CD4-positive, alpha-beta T cell (primary cell): ENCODE measurements at regions of chr12 and their contacts with region 1.

Region 1: DNA sequence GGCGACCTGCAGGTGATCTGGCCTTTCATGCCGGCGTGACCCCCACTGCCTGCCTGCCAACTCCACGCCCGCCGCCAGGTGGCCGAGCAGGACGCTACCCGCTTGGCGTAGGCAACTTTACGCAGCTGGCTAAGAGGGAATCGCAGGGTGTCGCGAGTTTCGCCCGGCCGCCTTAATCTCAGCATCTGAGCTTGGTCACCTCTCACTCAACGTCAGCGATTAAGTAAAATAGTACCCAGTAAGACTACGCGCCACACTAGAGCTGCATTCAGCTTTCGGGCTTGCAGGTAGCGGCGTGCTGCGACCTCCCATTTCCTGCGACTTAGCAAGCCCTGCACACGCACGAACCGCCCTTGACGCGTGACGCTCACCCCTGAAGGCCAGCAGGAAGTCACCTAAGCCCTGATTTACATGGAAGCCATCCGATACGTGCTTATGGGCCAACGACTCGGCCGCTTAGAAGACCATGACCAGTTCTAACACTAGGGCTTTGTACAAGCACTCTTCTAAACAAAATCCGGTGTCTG is 33.2 kb downstream of the WBP11 start:
- DNase-seq: peak; percentile 72 to 96 (median 83)
- ATAC-seq: peak; percentile 50
- H3K4me3 ChIP-seq: peak overlapping the region; percentile 71
- H3K4me3 Mint-ChIP-seq: peak overlapping the region; percentile 97
- H3K27ac ChIP-seq: peak overlapping the region; percentile 95 to 99
- H3K27ac Mint-ChIP-seq: peak overlapping the region; percentile 100
- H3K4me1 ChIP-seq: peaks cover 40% of the 10 kb centered on the region
- H3K4me1 Mint-ChIP-seq: peaks cover 79% of the 10 kb centered on the region
- H3K27me3 ChIP-seq: no peaks in the 10 kb centered on the region
- H3K27me3 Mint-ChIP-seq: no peaks in the 10 kb centered on the region
- CTCF ChIP-seq: peak; percentile 81

Region 2: DNA sequence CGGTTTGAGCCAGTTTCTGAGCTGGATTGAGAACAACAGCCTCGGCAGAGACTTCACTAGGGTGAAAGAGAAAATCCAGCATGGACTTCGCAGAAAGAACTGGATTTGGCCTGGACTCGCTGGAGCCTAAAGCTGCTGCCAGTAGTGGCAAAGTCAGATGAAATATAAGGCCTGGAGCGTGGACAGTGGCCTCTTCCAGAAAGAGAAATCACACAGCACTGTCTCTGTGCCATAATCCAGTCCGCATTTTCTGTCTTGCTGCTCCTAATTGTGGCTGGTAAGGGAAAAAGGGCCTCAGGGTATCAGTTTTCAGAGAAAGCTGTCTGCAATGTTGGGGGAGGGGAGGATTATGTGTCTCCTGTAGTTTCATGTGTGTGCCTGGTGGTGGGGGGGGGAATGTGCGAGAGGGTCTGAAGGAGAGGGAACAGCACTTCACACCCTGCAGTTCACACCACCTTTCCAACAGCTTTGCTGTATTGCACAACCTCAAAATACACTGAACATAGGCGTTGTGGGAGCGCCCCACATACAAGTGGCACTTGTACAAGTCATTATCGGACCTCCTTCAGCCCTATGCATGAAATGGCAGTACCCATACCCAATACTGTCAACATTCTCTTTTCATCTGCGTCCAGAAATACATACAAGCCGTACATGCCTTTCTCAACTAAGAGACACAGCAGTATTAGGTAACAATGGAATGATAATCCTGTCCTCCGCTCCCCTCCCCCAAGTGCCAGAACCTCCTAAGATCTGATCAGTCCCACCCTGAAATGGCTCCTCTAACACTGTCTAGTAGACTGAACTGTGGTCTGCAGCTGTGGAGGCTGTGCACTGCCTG is 512.1 kb before region 1 on chr12:
- CTCF ChIA-PET with region 1: no interaction called
- POLR2A ChIA-PET with region 1: interaction called, 14 read pairs
- intact Hi-C with region 1: loop called in 1 of 2 experiments (anchors 5 kb)
- DNase-seq: peak; percentile 57 to 95 (median 68)
- ATAC-seq: peak; percentile 54
- H3K4me3 ChIP-seq: peak overlapping the region; percentile 21
- H3K4me3 Mint-ChIP-seq: peak overlapping the region; percentile 83
- H3K27ac ChIP-seq: peak overlapping the region; percentile 68 to 84
- H3K27ac Mint-ChIP-seq: peak overlapping the region; percentile 98
- H3K4me1 ChIP-seq: peaks cover 43% of the 10 kb centered on the region
- H3K4me1 Mint-ChIP-seq: peaks cover 55% of the 10 kb centered on the region
- H3K27me3 ChIP-seq: no peaks in the 10 kb centered on the region
- H3K27me3 Mint-ChIP-seq: no peaks in the 10 kb centered on the region
- CTCF ChIP-seq: no peak

Region 3: GRCh38 chr12:14403711-14404196 is 366.3 kb before region 1 on chr12:
- CTCF ChIA-PET with region 1: no interaction called
- POLR2A ChIA-PET with region 1: interaction called, 6 read pairs
- intact Hi-C with region 1: loop called in 1 of 2 experiments (anchors 10 kb)
- DNase-seq: peak in 4 of 14 experiments; percentile 16 to 85 (median 80)
- ATAC-seq: peak; percentile 74
- H3K4me3 ChIP-seq: no peak overlapping the region
- H3K4me3 Mint-ChIP-seq: peak overlapping the region; percentile 69
- H3K27ac ChIP-seq: peak overlapping the region in 1 of 2 donors; percentile 55
- H3K27ac Mint-ChIP-seq: peak overlapping the region; percentile 91
- H3K4me1 ChIP-seq: peaks cover 36% of the 10 kb centered on the region
- H3K4me1 Mint-ChIP-seq: peaks cover 77% of the 10 kb centered on the region
- H3K27me3 ChIP-seq: no peaks in the 10 kb centered on the region
- H3K27me3 Mint-ChIP-seq: no peaks in the 10 kb centered on the region
- CTCF ChIP-seq: no peak

Region 4: DNA sequence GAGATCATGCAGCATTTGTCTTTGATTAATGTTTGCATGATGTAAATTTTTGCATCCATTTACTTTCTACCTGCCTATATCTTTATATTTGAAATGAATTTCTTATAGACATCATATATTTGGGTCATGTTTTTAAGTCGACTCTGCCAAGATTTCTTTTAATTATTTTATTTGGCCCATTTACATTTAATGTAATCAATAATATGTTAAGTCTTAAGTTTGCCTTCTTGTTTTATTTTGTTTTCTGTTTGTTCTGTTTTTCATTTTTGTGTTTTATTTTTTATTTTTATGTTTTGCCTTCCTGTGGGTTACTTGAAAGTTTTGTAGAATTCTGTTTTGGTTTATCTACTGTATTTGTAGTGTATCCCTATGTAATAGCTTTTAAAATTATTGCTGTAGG is 40.4 kb before region 1 on chr12:
- CTCF ChIA-PET with region 1: interaction called, 3 read pairs
- POLR2A ChIA-PET with region 1: interaction called, 13 read pairs
- intact Hi-C with region 1: loop called in 1 of 2 experiments (anchors 5 kb)
- DNase-seq: no peak
- ATAC-seq: no peak
- H3K4me3 ChIP-seq: no peak overlapping the region
- H3K4me3 Mint-ChIP-seq: no peak overlapping the region
- H3K27ac ChIP-seq: no peak overlapping the region
- H3K27ac Mint-ChIP-seq: no peak overlapping the region
- H3K4me1 ChIP-seq: no peaks in the 10 kb centered on the region
- H3K4me1 Mint-ChIP-seq: no peaks in the 10 kb centered on the region
- H3K27me3 ChIP-seq: peaks cover 0 to 8% of the 10 kb centered on the region in 2 experiments
- H3K27me3 Mint-ChIP-seq: no peaks in the 10 kb centered on the region
- CTCF ChIP-seq: no peak

Region 5: DNA sequence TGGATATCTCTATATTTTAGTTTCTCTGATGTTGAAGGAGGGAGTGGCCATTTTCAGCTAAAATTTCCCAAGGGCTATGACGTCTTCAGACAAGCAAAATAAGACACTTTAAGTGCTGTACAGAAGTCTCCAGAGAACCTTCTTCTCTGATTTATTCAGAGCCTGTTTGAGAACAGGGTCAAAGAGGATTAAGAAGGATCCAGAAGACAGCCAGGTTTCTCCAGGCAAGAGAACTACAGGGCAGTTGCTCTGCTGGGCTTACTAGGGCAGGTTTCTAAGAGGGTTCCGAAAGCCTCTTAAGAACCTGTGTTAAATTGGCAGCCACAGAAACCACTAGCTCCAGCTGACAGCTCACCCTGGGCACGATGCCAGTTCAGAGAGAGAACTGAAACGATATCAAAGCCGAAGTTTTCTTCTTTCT is 114.4 kb after region 1 on chr12:
- CTCF ChIA-PET with region 1: no interaction called
- POLR2A ChIA-PET with region 1: interaction called, 3 read pairs
- intact Hi-C with region 1: loop called in 1 of 2 experiments (anchors 10 kb)
- DNase-seq: peak; percentile 68 to 93 (median 82)
- ATAC-seq: peak; percentile 91
- H3K4me3 ChIP-seq: peak overlapping the region; percentile 7
- H3K4me3 Mint-ChIP-seq: peak overlapping the region; percentile 75
- H3K27ac ChIP-seq: no peak overlapping the region
- H3K27ac Mint-ChIP-seq: peak overlapping the region; percentile 86
- H3K4me1 ChIP-seq: peaks cover 11% of the 10 kb centered on the region
- H3K4me1 Mint-ChIP-seq: peaks cover 47% of the 10 kb centered on the region
- H3K27me3 ChIP-seq: no peaks in the 10 kb centered on the region
- H3K27me3 Mint-ChIP-seq: no peaks in the 10 kb centered on the region
- CTCF ChIP-seq: no peak

Region 6: GRCh38 chr12:15050659-15051058 is 280.6 kb after region 1 on chr12:
- CTCF ChIA-PET with region 1: no interaction called
- POLR2A ChIA-PET with region 1: interaction called, 14 read pairs
- intact Hi-C with region 1: no loop called
- DNase-seq: peak in 6 of 14 experiments; percentile 4 to 72 (median 11)
- ATAC-seq: peak; percentile 91
- H3K4me3 ChIP-seq: no peak overlapping the region
- H3K4me3 Mint-ChIP-seq: peak overlapping the region; percentile 66
- H3K27ac ChIP-seq: no peak overlapping the region
- H3K27ac Mint-ChIP-seq: peak overlapping the region; percentile 58
- H3K4me1 ChIP-seq: no peaks in the 10 kb centered on the region
- H3K4me1 Mint-ChIP-seq: peaks cover 31% of the 10 kb centered on the region
- H3K27me3 ChIP-seq: no peaks in the 10 kb centered on the region
- H3K27me3 Mint-ChIP-seq: no peaks in the 10 kb centered on the region
- CTCF ChIP-seq: no peak